Activated CD4-positive, alpha-beta memory T cell treated with anti-CD3 and anti-CD28 coated beads for 36 hours (primary cell): ENCODE measurements at regions of chr6 and their contacts with region 1.

Region 1: GRCh38 chr6:30500421-30501355 is 11.4 kb downstream of the HLA-E start:
- DNase-seq: no peak
- H3K4me3 Mint-ChIP-seq: peak overlapping the region; percentile 64
- H3K27ac Mint-ChIP-seq: peak overlapping the region; percentile 58
- H3K4me1 Mint-ChIP-seq: peaks cover 43% of the 10 kb centered on the region
- H3K27me3 Mint-ChIP-seq: no peaks in the 10 kb centered on the region

Region 2: GRCh38 chr6:30515932-30516753 is 15.5 kb after region 1 on chr6:
- CTCF ChIA-PET with region 1: interaction called, 15 read pairs
- POLR2A ChIA-PET with region 1: interaction called, 7 read pairs
- intact Hi-C with region 1: loop called (anchors 1 kb)
- DNase-seq: peak; percentile 97
- H3K4me3 Mint-ChIP-seq: peak overlapping the region; percentile 78
- H3K27ac Mint-ChIP-seq: peak overlapping the region; percentile 98
- H3K4me1 Mint-ChIP-seq: peaks cover 59% of the 10 kb centered on the region
- H3K27me3 Mint-ChIP-seq: no peaks in the 10 kb centered on the region

Region 3: GRCh38 chr6:30752157-30752927 is 251.7 kb after region 1 on chr6:
- CTCF ChIA-PET with region 1: no interaction called
- POLR2A ChIA-PET with region 1: no interaction called
- intact Hi-C with region 1: no loop called
- DNase-seq: no peak
- H3K4me3 Mint-ChIP-seq: no peak overlapping the region
- H3K27ac Mint-ChIP-seq: no peak overlapping the region
- H3K4me1 Mint-ChIP-seq: peaks cover 21% of the 10 kb centered on the region
- H3K27me3 Mint-ChIP-seq: no peaks in the 10 kb centered on the region